ENCODE measurements at regions of chr2 and their contacts with region 1.

Region 1: GRCh38 chr2:43995733-43996533 is at the start of gene LRPPRC:
- DNase-seq: peak; percentile 98
- H3K4me3 Mint-ChIP-seq: peak within 1 kb of the TSS; percentile 87
- H3K27ac Mint-ChIP-seq: peak within 1 kb of the TSS; percentile 100
- H3K4me1 Mint-ChIP-seq: peaks cover 36% of the 10 kb centered on the region
- H3K27me3 Mint-ChIP-seq: no peaks in the 10 kb centered on the region
- CTCF ChIP-seq: no peak
- total RNA-seq, gene LRPPRC: 139 and 160 TPM in 2 replicates

Region 2: GRCh38 chr2:43977677-43978375 is 18.1 kb before region 1 on chr2:
- CTCF ChIA-PET with region 1: interaction called, 3 read pairs
- POLR2A ChIA-PET with region 1: interaction called, 13 read pairs
- intact Hi-C with region 1: no loop called
- DNase-seq: no peak
- H3K4me3 Mint-ChIP-seq: no peak overlapping the region
- H3K27ac Mint-ChIP-seq: peak overlapping the region; percentile 51
- H3K4me1 Mint-ChIP-seq: no peaks in the 10 kb centered on the region
- H3K27me3 Mint-ChIP-seq: no peaks in the 10 kb centered on the region
- CTCF ChIP-seq: no peak

Region 3: DNA sequence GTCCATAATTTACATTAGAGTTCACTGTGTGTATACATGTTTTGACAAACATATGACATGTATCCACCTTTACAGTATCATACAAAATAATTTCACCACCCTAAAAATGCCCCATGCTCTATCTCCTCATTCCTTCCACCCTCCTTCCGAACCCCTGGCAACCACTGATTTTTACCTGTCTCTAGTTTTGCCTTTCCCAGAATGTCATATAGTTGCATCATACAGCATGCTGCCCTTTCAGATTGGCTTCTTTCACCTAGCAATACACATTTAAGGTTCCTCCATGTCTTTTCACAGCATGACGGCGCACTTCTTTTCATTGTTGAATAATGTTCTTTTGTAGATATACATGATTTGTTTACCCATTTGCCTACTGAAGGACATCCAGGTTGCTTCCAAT is 10.6 kb before region 1 on chr2:
- CTCF ChIA-PET with region 1: interaction called, 3 read pairs
- POLR2A ChIA-PET with region 1: interaction called, 15 read pairs
- intact Hi-C with region 1: no loop called
- DNase-seq: no peak
- H3K4me3 Mint-ChIP-seq: no peak overlapping the region
- H3K27ac Mint-ChIP-seq: no peak overlapping the region
- H3K4me1 Mint-ChIP-seq: peaks cover 10% of the 10 kb centered on the region
- H3K27me3 Mint-ChIP-seq: no peaks in the 10 kb centered on the region
- CTCF ChIP-seq: no peak

Measured in MCF 10A (cell line).